H1 (cell line): ENCODE measurements at regions of chr1 and their contacts with region 1.

Region 1: GRCh38 chr1:31977385-31978131 is 36.1 kb upstream of the KHDRBS1 start:
- DNase-seq: peak; percentile 64 to 68
- H3K4me3 ChIP-seq: no peak overlapping the region
- H3K27ac ChIP-seq: no peak overlapping the region
- H3K4me1 ChIP-seq: no peaks in the 10 kb centered on the region
- H3K27me3 ChIP-seq: no peaks in the 10 kb centered on the region
- CTCF ChIP-seq: peak; percentile 35 to 94 (median 86)
- EP300 ChIP-seq: no peak
- POLR2A ChIP-seq: no peak
- RAD21 ChIP-seq: peak; percentile 70 to 80

Region 2: GRCh38 chr1:31923901-31924535 is 53.5 kb before region 1 on chr1:
- CTCF ChIA-PET with region 1: no interaction called
- POLR2A ChIA-PET with region 1: no interaction called
- DNase-seq: no peak
- H3K4me3 ChIP-seq: no peak overlapping the region
- H3K27ac ChIP-seq: no peak overlapping the region
- H3K4me1 ChIP-seq: peaks cover 0 to 6% (median 0%) of the 10 kb centered on the region in 4 experiments; a peak in 1 of 7 replicates
- H3K27me3 ChIP-seq: no peaks in the 10 kb centered on the region
- CTCF ChIP-seq: no peak
- EP300 ChIP-seq: no peak
- POLR2A ChIP-seq: no peak
- RAD21 ChIP-seq: no peak

Region 3: GRCh38 chr1:31955917-31956736 is 21.4 kb before region 1 on chr1:
- CTCF ChIA-PET with region 1: interaction called, 48 read pairs
- POLR2A ChIA-PET with region 1: interaction called, 6 read pairs
- DNase-seq: no peak
- H3K4me3 ChIP-seq: no peak overlapping the region
- H3K27ac ChIP-seq: 0 out of 2 replicates have a peak overlapping the region, but pooled peaks have one; percentile 51
- H3K4me1 ChIP-seq: peaks cover 7 to 19% (median 12%) of the 10 kb centered on the region in 4 experiments; a peak in 6 of 7 replicates
- H3K27me3 ChIP-seq: no peaks in the 10 kb centered on the region
- CTCF ChIP-seq: peak; percentile 5 to 23 (median 13); a peak in 3 of 4 replicates
- EP300 ChIP-seq: no peak
- POLR2A ChIP-seq: no peak
- RAD21 ChIP-seq: peak; percentile 20 to 41; a peak in 3 of 4 replicates

Region 4: DNA sequence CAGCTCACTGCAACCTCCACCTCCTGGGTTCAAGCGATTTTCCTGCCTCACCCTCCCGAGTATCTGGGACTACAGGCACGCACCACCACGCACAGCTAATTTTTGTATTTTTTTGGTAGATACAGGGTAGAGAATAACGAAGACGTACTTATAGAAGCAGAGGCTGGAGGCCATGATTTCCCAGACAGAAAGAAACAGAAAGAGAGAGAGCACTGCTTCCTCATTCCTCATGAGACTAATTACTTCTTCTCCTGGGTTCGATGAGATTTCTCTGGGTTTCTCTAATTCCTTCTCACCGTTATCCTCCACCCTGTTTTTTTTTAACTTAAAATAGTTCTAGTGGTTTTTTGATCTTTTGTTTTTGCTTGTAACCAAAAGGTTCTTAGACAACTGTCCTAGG is 16.0 kb before region 1 on chr1:
- CTCF ChIA-PET with region 1: interaction called, 48 read pairs
- POLR2A ChIA-PET with region 1: interaction called, 4 read pairs
- DNase-seq: no peak
- H3K4me3 ChIP-seq: no peak overlapping the region
- H3K27ac ChIP-seq: no peak overlapping the region
- H3K4me1 ChIP-seq: no peaks in the 10 kb centered on the region; a peak in 1 of 7 replicates
- H3K27me3 ChIP-seq: no peaks in the 10 kb centered on the region
- CTCF ChIP-seq: no peak
- EP300 ChIP-seq: no peak
- POLR2A ChIP-seq: no peak
- RAD21 ChIP-seq: no peak

Region 5: GRCh38 chr1:31991182-31991581 is 13.6 kb after region 1 on chr1:
- CTCF ChIA-PET with region 1: interaction called, 18 read pairs
- POLR2A ChIA-PET with region 1: no interaction called
- DNase-seq: no peak
- H3K4me3 ChIP-seq: no peak overlapping the region
- H3K27ac ChIP-seq: no peak overlapping the region
- H3K4me1 ChIP-seq: peaks cover 0 to 6% (median 3%) of the 10 kb centered on the region in 4 experiments; a peak in 6 of 7 replicates
- H3K27me3 ChIP-seq: no peaks in the 10 kb centered on the region
- CTCF ChIP-seq: no peak
- EP300 ChIP-seq: no peak
- POLR2A ChIP-seq: no peak
- RAD21 ChIP-seq: no peak

Region 6: DNA sequence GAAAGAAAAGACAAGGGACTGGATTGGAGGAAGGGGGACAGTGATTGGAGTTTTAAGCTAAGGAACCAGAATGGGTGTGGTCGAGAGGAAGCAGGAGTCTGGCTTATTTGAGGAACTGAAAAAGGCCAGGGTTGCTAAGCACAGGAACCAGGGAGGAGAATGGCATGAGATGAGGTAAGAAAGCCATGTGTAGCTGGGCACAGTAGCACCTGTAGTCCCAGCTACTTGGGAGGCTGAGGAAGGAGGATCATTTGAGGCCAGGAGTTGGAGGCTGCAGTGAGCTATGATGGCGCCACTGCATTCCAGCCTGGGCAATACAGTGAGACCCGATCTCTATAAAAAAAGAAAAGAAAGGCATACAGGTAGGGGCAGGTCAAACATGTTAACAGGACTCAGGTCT is 28.0 kb after region 1 on chr1:
- CTCF ChIA-PET with region 1: interaction called, 72 read pairs
- POLR2A ChIA-PET with region 1: interaction called, 3 read pairs
- DNase-seq: no peak
- H3K4me3 ChIP-seq: no peak overlapping the region
- H3K27ac ChIP-seq: no peak overlapping the region
- H3K4me1 ChIP-seq: peaks cover 2 to 13% (median 8%) of the 10 kb centered on the region in 4 experiments
- H3K27me3 ChIP-seq: no peaks in the 10 kb centered on the region
- CTCF ChIP-seq: no peak
- EP300 ChIP-seq: no peak
- POLR2A ChIP-seq: no peak
- RAD21 ChIP-seq: no peak

Region 7: DNA sequence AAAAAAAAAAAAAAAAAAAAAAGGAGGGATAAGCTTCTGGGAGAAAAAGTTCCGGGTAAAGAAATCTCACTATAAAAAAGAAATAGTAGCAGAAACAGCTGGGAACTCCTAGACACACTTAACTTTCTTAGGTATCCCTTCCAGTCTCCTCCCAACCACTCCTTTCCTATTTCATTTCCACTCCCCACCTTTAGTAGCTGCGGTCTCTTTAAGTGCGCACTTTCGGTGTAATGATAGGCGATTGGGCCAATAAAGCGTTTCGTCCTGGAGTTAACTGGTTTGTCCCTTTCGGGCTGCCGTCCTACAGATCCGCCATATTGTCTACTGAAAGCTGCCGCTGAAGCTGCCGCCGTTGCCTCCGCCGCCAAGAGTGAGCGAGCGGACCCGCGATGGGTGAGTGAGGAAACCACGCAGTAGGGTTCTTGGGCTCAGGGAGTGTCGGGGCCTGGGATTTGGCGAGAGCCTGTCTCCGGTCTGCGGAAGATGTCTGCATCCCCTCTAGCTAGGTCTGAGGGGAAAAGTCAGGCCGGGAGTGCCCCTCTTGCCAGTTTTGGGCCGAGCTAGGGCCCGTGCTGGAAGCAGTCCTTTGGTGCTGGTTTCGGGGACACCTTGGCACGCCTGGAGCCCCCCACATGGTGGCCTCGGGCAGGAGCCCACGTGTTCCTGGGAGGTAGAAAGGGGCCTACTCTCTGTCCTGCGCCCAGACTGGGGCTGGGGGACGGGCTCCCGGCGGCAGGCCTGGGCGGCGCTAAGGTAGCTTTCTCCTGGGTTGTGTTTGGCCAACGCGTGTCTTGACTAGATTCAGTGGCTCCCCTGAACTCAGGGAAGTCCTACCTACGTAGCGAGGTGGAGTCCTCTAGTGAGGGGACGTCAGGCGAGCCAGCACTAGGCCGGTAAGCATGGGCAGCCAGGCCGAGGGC is 130.4 kb after region 1 on chr1 and contains the start of gene KPNA6:
- CTCF ChIA-PET with region 1: interaction called, 10 read pairs
- POLR2A ChIA-PET with region 1: no interaction called
- DNase-seq: peak; percentile 77 to 94
- H3K4me3 ChIP-seq: peak within 1 kb of the TSS; percentile 89 to 100 (median 97)
- H3K27ac ChIP-seq: peak within 1 kb of the TSS; percentile 89
- H3K4me1 ChIP-seq: peaks cover 0 to 1% (median 0%) of the 10 kb centered on the region in 4 experiments; a peak in 1 of 7 replicates
- H3K27me3 ChIP-seq: no peaks in the 10 kb centered on the region
- CTCF ChIP-seq: 0 out of 4 replicates have a peak, but pooled peaks of 1 of the 3 experiments have one; percentile 3
- EP300 ChIP-seq: peak in 1 of 2 experiments; percentile 16; a peak in 1 of 3 replicates
- POLR2A ChIP-seq: peak in 1 of 2 experiments; percentile 78; a peak in 2 of 3 replicates
- RAD21 ChIP-seq: no peak
- total RNA-seq, gene KPNA6: 116 and 120 TPM in 2 replicates